Activated CD4-positive, alpha-beta memory T cell treated with anti-CD3 and anti-CD28 coated beads for 36 hours (primary cell): ENCODE measurements at regions of chr6 and their contacts with region 1.

Region 1: GRCh38 chr6:41920921-41921711 is at the starts of genes BYSL and MED20:
- DNase-seq: peak; percentile 96
- H3K4me3 Mint-ChIP-seq: peak within 1 kb of the TSS; percentile 93
- H3K27ac Mint-ChIP-seq: peak within 1 kb of the TSS; percentile 96
- H3K4me1 Mint-ChIP-seq: peaks cover 49% of the 10 kb centered on the region
- H3K27me3 Mint-ChIP-seq: no peaks in the 10 kb centered on the region
- total RNA-seq, gene BYSL: 46.6 to 51.0 TPM
- total RNA-seq, gene MED20: 18.2 to 18.3 TPM

Region 2: GRCh38 chr6:41787219-41787917 is 133.7 kb before region 1 on chr6 and contains the start of gene TOMM6:
- CTCF ChIA-PET with region 1: interaction called, 33 read pairs
- POLR2A ChIA-PET with region 1: interaction called, 4 read pairs
- intact Hi-C with region 1: loop called (anchors 1 kb)
- DNase-seq: peak; percentile 98
- H3K4me3 Mint-ChIP-seq: peak within 1 kb of the TSS; percentile 92
- H3K27ac Mint-ChIP-seq: peak within 1 kb of the TSS; percentile 90
- H3K4me1 Mint-ChIP-seq: peaks cover 20% of the 10 kb centered on the region
- H3K27me3 Mint-ChIP-seq: no peaks in the 10 kb centered on the region
- total RNA-seq, gene TOMM6: 264 to 280 TPM

Region 3: DNA sequence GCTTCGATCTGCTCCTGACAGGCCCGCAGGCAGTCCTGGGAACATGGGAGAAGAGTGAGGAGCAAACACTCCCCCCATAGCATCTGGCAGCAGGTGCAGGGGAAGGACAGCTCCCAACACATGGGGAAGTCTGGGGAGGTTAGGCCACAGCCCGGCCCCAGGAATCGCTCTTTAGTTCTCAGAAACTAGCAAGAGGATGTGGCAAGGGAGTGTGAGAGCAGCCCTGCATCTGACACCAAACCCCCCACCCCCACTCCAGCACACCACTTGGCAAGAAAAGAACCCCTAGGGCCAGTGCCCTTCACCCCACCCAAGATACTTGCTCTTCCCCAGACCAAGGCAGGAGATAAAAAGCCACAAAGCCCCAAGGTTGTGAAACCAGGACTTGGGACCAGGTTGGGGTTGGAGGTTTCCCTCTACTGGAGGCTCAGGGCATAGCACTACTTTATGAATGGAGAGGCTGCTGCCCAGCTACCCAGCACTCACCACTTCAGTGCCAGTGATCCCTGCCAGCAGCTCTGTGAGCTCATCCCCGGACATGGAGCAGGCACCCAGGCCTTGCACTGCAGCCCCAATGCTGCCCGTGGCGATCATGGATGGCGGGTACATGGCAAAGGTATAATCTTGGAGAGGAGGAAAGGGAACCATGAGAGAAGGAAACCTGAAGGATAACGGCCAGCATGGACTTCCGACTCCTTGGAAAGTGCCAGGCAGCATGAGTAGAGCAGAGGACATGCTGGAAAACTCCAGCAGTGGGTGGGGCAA is 15.1 kb after region 1 on chr6:
- CTCF ChIA-PET with region 1: interaction called, 78 read pairs
- POLR2A ChIA-PET with region 1: interaction called, 17 read pairs
- intact Hi-C with region 1: loop called (anchors 1 kb)
- DNase-seq: peak; percentile 87
- H3K4me3 Mint-ChIP-seq: peak overlapping the region; percentile 99
- H3K27ac Mint-ChIP-seq: peak overlapping the region; percentile 90
- H3K4me1 Mint-ChIP-seq: peaks cover 53% of the 10 kb centered on the region
- H3K27me3 Mint-ChIP-seq: no peaks in the 10 kb centered on the region

Region 4: GRCh38 chr6:42009966-42010891 is 89.1 kb after region 1 on chr6:
- CTCF ChIA-PET with region 1: interaction called, 10 read pairs
- POLR2A ChIA-PET with region 1: no interaction called
- intact Hi-C with region 1: no loop called
- DNase-seq: peak; percentile 67
- H3K4me3 Mint-ChIP-seq: peak overlapping the region; percentile 68
- H3K27ac Mint-ChIP-seq: peak overlapping the region; percentile 97
- H3K4me1 Mint-ChIP-seq: peaks cover 69% of the 10 kb centered on the region
- H3K27me3 Mint-ChIP-seq: no peaks in the 10 kb centered on the region

Region 5: DNA sequence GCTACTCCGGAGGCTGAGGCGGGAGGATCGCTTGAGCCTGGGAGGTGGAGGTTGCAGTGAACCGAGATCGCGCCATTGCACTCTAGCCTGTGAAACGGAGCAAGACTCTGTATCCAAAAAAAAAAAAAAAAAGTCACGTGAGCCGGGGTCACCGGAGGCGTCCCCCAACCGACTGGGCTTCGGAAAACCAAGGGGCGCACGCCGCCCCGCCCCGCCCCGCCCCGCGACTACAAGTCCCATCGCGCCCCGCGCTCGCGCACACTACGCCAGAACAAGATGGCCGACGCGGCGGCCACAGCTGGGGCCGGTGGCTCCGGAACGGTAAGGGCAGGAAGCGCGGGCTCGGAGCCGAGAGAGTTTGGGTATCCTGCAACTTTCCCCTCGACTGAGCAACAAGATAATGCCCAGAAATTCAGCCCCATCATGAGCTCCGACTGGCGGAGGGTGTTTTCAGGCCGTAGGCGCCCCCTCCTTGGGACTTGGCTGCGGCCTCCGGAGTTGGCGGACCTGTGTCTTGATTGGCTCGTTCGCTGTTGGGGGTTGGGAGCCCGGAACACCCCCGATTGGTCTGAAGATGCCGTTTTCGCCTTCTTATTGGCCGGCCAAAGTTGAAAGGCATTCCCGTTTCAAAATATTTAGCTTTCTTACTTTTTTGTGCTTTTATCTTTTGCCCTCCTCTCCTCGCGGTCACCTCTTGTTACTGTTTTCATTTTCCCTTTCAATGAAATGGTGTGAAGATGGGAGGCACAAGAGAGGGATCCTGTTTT is 129.3 kb after region 1 on chr6 and contains the start of gene TAF8:
- CTCF ChIA-PET with region 1: interaction called, 156 read pairs
- POLR2A ChIA-PET with region 1: interaction called, 18 read pairs
- intact Hi-C with region 1: loop called (anchors 1 kb)
- DNase-seq: peak; percentile 95
- H3K4me3 Mint-ChIP-seq: peak within 1 kb of the TSS; percentile 97
- H3K27ac Mint-ChIP-seq: peak within 1 kb of the TSS; percentile 99
- H3K4me1 Mint-ChIP-seq: peaks cover 67% of the 10 kb centered on the region
- H3K27me3 Mint-ChIP-seq: no peaks in the 10 kb centered on the region
- total RNA-seq, gene TAF8: 57.7 to 58.7 TPM

Region 6: GRCh38 chr6:42118162-42119001 is 197.3 kb after region 1 on chr6:
- CTCF ChIA-PET with region 1: no interaction called
- POLR2A ChIA-PET with region 1: no interaction called
- intact Hi-C with region 1: no loop called
- DNase-seq: no peak
- H3K4me3 Mint-ChIP-seq: no peak overlapping the region
- H3K27ac Mint-ChIP-seq: no peak overlapping the region
- H3K4me1 Mint-ChIP-seq: no peaks in the 10 kb centered on the region
- H3K27me3 Mint-ChIP-seq: peaks cover 7% of the 10 kb centered on the region

Region 7: GRCh38 chr6:42563697-42564505 is 642.8 kb after region 1 on chr6 and contains the start of gene UBR2:
- CTCF ChIA-PET with region 1: no interaction called
- POLR2A ChIA-PET with region 1: no interaction called
- intact Hi-C with region 1: loop called (anchors 1 kb)
- DNase-seq: peak; percentile 96
- H3K4me3 Mint-ChIP-seq: peak within 1 kb of the TSS; percentile 83
- H3K27ac Mint-ChIP-seq: peak within 1 kb of the TSS; percentile 91
- H3K4me1 Mint-ChIP-seq: peaks cover 25% of the 10 kb centered on the region
- H3K27me3 Mint-ChIP-seq: no peaks in the 10 kb centered on the region
- total RNA-seq, gene UBR2: 31.4 to 32.5 TPM